GM12878 (cell line): ENCODE measurements at regions of chr17 and their contacts with region 1.

Region 1: GRCh38 chr17:47286198-47286914 is 32.7 kb downstream of the ITGB3 start:
- DNase-seq: peak; percentile 98
- ATAC-seq: peak; percentile 85
- H3K4me3 ChIP-seq: no peak overlapping the region
- H3K27ac ChIP-seq: peak overlapping the region; percentile 97
- H3K4me1 ChIP-seq: peaks cover 30% of the 10 kb centered on the region
- H3K27me3 ChIP-seq: no peaks in the 10 kb centered on the region
- CTCF ChIP-seq: no peak
- EP300 ChIP-seq: peak; percentile 65 to 70; a peak in 2 of 4 replicates
- POLR2A ChIP-seq: peak; percentile 54
- RAD21 ChIP-seq: peak; percentile 30; the same call in 1 of the 2 replicates

Region 2: DNA sequence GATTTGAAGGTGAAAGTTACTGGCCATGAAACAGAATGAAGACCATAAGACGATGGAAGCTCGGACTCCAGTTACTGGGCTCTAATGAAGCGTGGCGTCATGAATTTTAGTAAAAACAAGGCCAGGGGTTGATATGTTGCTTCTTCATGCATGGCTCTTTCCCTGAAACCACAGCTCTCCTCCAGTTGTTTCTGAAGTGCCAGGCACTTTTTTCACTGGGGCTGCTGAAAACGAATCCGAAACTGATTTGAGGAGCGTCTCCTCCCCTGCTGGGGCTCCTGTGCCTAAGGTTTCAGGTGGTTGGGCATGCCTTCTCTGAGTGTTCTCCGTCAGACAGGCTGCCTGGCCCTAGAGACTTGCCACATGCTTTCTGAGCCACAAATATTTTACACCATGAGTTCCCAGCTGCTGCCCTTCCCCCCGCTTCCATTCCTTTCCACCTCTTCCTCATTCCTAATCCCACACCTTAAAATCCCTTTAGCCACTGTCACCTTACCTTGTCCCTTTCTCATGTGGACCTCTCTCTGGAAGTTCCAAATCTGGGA is 80.9 kb before region 1 on chr17:
- CTCF ChIA-PET with region 1: interaction called, 24 read pairs
- POLR2A ChIA-PET with region 1: interaction called, 3 read pairs
- RAD21 ChIA-PET with region 1: interaction called, 15 read pairs
- SMC1A ChIA-PET with region 1: interaction called, 11 read pairs
- in situ Hi-C with region 1: no loop called
- intact Hi-C with region 1: no loop called
- DNase-seq: peak; percentile 78
- ATAC-seq: peak; percentile 85
- H3K4me3 ChIP-seq: peak overlapping the region; percentile 2; the same call in 1 of the 2 replicates
- H3K27ac ChIP-seq: peak overlapping the region; percentile 68
- H3K4me1 ChIP-seq: peaks cover 64% of the 10 kb centered on the region
- H3K27me3 ChIP-seq: no peaks in the 10 kb centered on the region
- CTCF ChIP-seq: no peak
- EP300 ChIP-seq: peak in 1 of 2 experiments; percentile 39; a peak in 1 of 4 replicates
- POLR2A ChIP-seq: peak; percentile 31; the same call in 1 of the 2 replicates
- RAD21 ChIP-seq: no peak

Region 3: GRCh38 chr17:47239619-47240374 is 46.6 kb before region 1 on chr17:
- CTCF ChIA-PET with region 1: interaction called, 12 read pairs
- POLR2A ChIA-PET with region 1: interaction called, 5 read pairs
- RAD21 ChIA-PET with region 1: interaction called, 6 read pairs
- SMC1A ChIA-PET with region 1: interaction called, 22 read pairs
- in situ Hi-C with region 1: no loop called
- intact Hi-C with region 1: no loop called
- DNase-seq: peak; percentile 40
- ATAC-seq: peak; percentile 88
- H3K4me3 ChIP-seq: no peak overlapping the region
- H3K27ac ChIP-seq: no peak overlapping the region
- H3K4me1 ChIP-seq: peaks cover 10% of the 10 kb centered on the region
- H3K27me3 ChIP-seq: no peaks in the 10 kb centered on the region
- CTCF ChIP-seq: no peak
- EP300 ChIP-seq: no peak
- POLR2A ChIP-seq: no peak
- RAD21 ChIP-seq: no peak

Region 4: GRCh38 chr17:47265983-47266541 is 20.3 kb before region 1 on chr17:
- CTCF ChIA-PET with region 1: interaction called, 14 read pairs
- POLR2A ChIA-PET with region 1: interaction called, 6 read pairs
- RAD21 ChIA-PET with region 1: interaction called, 14 read pairs
- SMC1A ChIA-PET with region 1: interaction called, 35 read pairs
- in situ Hi-C with region 1: no loop called
- intact Hi-C with region 1: loop called (anchors 2 kb)
- DNase-seq: no peak
- ATAC-seq: peak; percentile 42
- H3K4me3 ChIP-seq: no peak overlapping the region
- H3K27ac ChIP-seq: no peak overlapping the region
- H3K4me1 ChIP-seq: 0 out of 2 replicates have a peak, but pooled peaks cover 3% of the 10 kb centered on the region
- H3K27me3 ChIP-seq: no peaks in the 10 kb centered on the region
- CTCF ChIP-seq: no peak
- EP300 ChIP-seq: no peak
- POLR2A ChIP-seq: no peak
- RAD21 ChIP-seq: no peak

Region 5: GRCh38 chr17:47297661-47298615 is 11.6 kb after region 1 on chr17:
- CTCF ChIA-PET with region 1: interaction called, 7 read pairs
- POLR2A ChIA-PET with region 1: interaction called, 16 read pairs
- RAD21 ChIA-PET with region 1: interaction called, 9 read pairs
- SMC1A ChIA-PET with region 1: interaction called, 11 read pairs
- in situ Hi-C with region 1: no loop called
- intact Hi-C with region 1: no loop called
- DNase-seq: no peak
- ATAC-seq: no peak
- H3K4me3 ChIP-seq: no peak overlapping the region
- H3K27ac ChIP-seq: no peak overlapping the region
- H3K4me1 ChIP-seq: no peaks in the 10 kb centered on the region
- H3K27me3 ChIP-seq: no peaks in the 10 kb centered on the region
- CTCF ChIP-seq: no peak
- EP300 ChIP-seq: no peak
- POLR2A ChIP-seq: no peak
- RAD21 ChIP-seq: no peak

Region 6: GRCh38 chr17:47400333-47400732 is 114.0 kb after region 1 on chr17:
- CTCF ChIA-PET with region 1: no interaction called
- POLR2A ChIA-PET with region 1: no interaction called
- RAD21 ChIA-PET with region 1: no interaction called
- SMC1A ChIA-PET with region 1: no interaction called
- in situ Hi-C with region 1: no loop called
- intact Hi-C with region 1: no loop called
- DNase-seq: no peak
- ATAC-seq: no peak
- H3K4me3 ChIP-seq: no peak overlapping the region
- H3K27ac ChIP-seq: no peak overlapping the region
- H3K4me1 ChIP-seq: no peaks in the 10 kb centered on the region
- H3K27me3 ChIP-seq: no peaks in the 10 kb centered on the region
- CTCF ChIP-seq: no peak
- EP300 ChIP-seq: no peak
- POLR2A ChIP-seq: no peak
- RAD21 ChIP-seq: no peak